ENCODE measurements at regions of chr13 and their contacts with region 1.

Region 1: GRCh38 chr13:23375001-23375971 is 58.2 kb downstream of the SACS start:
- DNase-seq: peak; percentile 98
- H3K4me3 Mint-ChIP-seq: peak overlapping the region; percentile 79
- H3K27ac Mint-ChIP-seq: peak overlapping the region; percentile 64
- H3K4me1 Mint-ChIP-seq: peaks cover 54% of the 10 kb centered on the region
- H3K27me3 Mint-ChIP-seq: no peaks in the 10 kb centered on the region

Region 2: GRCh38 chr13:23579072-23579895 is 204.0 kb after region 1 on chr13:
- intact Hi-C with region 1: loop called (anchors 1 kb)
- DNase-seq: peak; percentile 98
- H3K4me3 Mint-ChIP-seq: peak overlapping the region; percentile 76
- H3K27ac Mint-ChIP-seq: no peak overlapping the region
- H3K4me1 Mint-ChIP-seq: peaks cover 18% of the 10 kb centered on the region
- H3K27me3 Mint-ChIP-seq: peaks cover 60% of the 10 kb centered on the region

Region 3: DNA sequence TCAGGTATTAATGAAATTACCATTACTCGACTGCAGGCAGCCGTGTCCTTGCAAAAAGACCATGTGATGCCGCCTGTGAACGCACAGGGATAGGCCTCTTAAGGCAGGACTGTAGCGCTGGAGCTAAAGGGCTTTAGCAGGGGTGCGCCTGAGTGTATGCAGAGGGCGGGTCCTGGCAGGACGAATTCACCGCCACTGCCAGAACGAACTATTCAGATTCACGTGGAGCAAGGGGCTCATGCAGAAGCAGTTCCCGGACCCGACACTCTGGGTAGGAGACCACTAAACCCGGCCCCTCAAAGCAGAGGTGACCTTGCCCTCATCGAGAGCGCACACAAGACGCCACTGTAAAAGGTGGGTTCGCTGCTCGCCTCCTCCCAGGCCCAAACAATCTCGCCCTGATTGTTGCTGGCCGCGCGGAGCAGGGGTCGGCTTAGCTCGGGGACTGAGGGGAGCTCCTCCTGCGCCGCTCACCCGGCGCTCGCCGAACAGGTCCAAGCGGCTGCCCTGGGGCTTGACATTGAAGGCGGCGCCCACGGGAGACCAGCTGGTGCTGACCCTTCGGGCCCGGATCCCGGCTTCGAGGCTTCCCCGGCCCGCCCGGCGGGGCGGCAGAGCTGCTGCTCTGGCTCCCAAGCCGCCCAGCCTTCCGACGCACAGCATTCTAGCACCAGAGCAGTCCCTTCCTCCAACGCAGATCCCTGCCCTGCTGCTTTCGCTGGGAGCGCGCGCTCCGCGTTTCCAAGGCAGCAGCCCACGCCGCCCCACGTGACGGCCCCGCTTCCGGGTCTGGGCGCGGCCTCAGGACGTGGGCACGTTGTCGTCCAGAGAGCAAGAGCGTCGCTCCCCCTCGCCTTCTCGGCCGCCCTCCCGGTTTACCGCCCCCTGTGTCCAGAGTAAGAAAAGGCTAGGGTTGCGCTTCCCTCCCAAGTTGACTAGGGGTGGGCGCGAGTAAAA is 513.6 kb after region 1 on chr13 and contains the start of gene MIPEP:
- intact Hi-C with region 1: loop called (anchors 5 kb)
- DNase-seq: peak; percentile 97
- H3K4me3 Mint-ChIP-seq: peak within 1 kb of the TSS; percentile 88
- H3K27ac Mint-ChIP-seq: peak within 1 kb of the TSS; percentile 82
- H3K4me1 Mint-ChIP-seq: peaks cover 22% of the 10 kb centered on the region
- H3K27me3 Mint-ChIP-seq: no peaks in the 10 kb centered on the region
- total RNA-seq, gene MIPEP: 10.4 and 10.9 TPM in 2 replicates

Region 4: GRCh38 chr13:24160454-24161009 is 785.2 kb after region 1 on chr13 and contains the start of gene SPATA13:
- intact Hi-C with region 1: loop called (anchors 5 kb)
- DNase-seq: peak; percentile 97
- H3K4me3 Mint-ChIP-seq: peak within 1 kb of the TSS; percentile 95
- H3K27ac Mint-ChIP-seq: peak within 1 kb of the TSS; percentile 90
- H3K4me1 Mint-ChIP-seq: peaks cover 21% of the 10 kb centered on the region
- H3K27me3 Mint-ChIP-seq: peaks cover 27% of the 10 kb centered on the region
- total RNA-seq, gene SPATA13: 41.9 and 43.6 TPM in 2 replicates